ENCODE measurements at regions of chr11 and their contacts with region 1.

Region 1: GRCh38 chr11:27244900-27245299 is 118.1 kb downstream of the CCDC34 start:
- DNase-seq: no peak
- ATAC-seq: no peak

Region 2: DNA sequence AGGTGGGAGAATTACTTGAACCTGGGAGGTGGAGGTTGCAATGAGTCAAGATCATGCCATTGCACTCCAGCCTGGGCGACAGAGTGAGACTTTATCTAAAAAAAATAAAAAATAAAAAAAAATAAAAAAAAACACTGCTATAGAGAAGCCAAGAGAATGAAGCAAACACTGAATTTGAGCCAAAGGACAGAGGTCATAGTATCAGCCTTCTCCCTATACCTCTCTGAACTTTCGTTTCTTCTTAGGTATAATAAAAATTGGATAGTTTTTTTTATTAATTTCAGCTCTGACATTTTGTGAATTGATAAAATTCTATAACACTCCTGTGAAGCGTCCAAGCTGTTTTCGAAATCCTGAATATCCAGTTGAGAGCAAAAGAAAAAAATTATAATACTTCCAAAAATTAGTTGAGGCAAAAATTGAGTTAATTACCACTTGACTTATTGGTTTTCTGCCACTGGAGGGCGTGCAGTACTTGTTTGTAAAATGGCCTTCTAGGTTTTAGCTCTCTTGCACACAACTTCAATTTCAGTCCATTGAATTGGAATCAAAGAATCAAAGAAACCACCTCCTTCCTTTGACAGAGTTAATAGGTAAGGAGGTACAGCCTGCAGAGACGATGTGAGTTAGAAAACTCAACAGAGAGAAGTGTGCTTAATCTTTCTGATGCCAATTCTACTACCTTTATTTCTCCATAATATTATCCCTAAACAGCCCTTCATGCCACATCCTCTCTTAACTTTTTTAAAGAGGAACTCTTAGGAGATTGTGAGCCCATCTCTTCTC is 61.0 kb before region 1 on chr11:
- intact Hi-C with region 1: no loop called
- DNase-seq: peak; percentile 75
- ATAC-seq: peak; percentile 66

Region 3: GRCh38 chr11:27216270-27217149 is 28.4 kb before region 1 on chr11:
- intact Hi-C with region 1: loop called (anchors 1 kb)
- DNase-seq: no peak
- ATAC-seq: peak; percentile 30

Region 4: GRCh38 chr11:27362749-27363575 is 118.1 kb after region 1 on chr11 and contains the start of gene CCDC34:
- intact Hi-C with region 1: no loop called
- DNase-seq: peak; percentile 94
- ATAC-seq: peak; percentile 100
- total RNA-seq, gene CCDC34: 7.8 TPM

Measured in sciatic nerve (tissue), 2 donors.